Dendritic cell treated with granulocyte-macrophage colony-stimulating factor and Interleukin-4, amounts not matched to agents 40 ng/mL and 50 ng/mL, for 4 days (primary cell): ENCODE measurements at regions of chr16 and their contacts with region 1.

Region 1: DNA sequence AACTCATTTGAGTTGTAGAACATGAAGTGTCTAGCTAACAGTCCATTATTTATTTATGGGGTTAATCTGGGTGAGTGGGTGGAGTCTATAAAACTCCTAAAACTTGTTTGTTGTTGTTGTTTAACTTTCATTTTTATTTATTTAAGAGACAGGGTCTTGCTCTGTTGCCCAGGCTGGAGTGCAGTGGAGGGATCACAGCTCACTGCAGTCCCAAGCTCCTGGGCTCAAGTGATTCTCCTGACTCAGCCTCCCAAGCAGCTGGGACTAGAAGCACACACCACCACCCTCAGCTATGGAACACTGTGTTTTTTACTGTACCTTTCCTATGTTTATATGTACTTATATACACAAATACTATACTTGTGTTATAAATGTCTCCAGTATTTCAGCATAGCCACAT is 77.8 kb upstream of the CLEC18B start:
- H3K4me3 Mint-ChIP-seq: no peak overlapping the region
- H3K27ac Mint-ChIP-seq: no peak overlapping the region
- H3K4me1 Mint-ChIP-seq: no peaks in the 10 kb centered on the region
- H3K27me3 Mint-ChIP-seq: no peaks in the 10 kb centered on the region

Region 2: GRCh38 chr16:74623214-74623842 is 124.2 kb after region 1 on chr16:
- intact Hi-C with region 1: loop called (anchors 5 kb)
- H3K4me3 Mint-ChIP-seq: no peak overlapping the region
- H3K27ac Mint-ChIP-seq: no peak overlapping the region
- H3K4me1 Mint-ChIP-seq: no peaks in the 10 kb centered on the region
- H3K27me3 Mint-ChIP-seq: no peaks in the 10 kb centered on the region